Panc1 (cell line): ENCODE measurements at regions of chr7 and their contacts with region 1.

Region 1: DNA sequence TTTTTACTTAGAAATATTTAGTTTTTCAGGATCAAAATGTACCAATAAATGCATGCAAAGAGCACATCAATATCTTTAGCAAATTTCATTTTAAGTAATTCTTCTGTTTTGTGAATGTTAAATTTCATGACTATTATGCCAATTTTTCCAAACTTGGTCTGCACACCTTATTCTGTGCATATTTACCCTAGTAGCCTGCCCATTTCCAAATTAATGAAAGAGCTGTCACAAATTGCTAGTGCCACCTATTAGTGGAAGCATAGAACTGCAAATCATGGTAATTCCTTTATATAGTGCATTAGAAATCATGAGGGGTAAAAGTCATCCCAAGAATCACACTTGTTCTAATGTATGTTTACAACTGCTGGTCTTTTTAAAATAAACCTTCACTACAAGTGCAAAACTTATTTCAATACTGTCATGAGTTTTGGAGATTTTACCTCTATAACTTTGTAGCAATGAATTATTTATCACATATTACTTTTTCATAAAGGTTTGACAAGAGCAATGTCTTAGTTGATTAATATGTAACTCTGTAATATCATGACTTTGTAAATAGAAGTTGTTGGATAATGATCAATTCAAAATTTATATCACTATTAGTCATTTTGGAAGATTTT is 5.7 kb downstream of the SEMA3A start:
- DNase-seq: no peak
- ATAC-seq: no peak
- H3K4me3 ChIP-seq: no peak overlapping the region
- H3K27ac ChIP-seq: no peak overlapping the region; the same call in 1 of the 2 replicates
- H3K4me1 ChIP-seq: peaks cover 22% of the 10 kb centered on the region; the same call in 1 of the 2 replicates
- H3K27me3 ChIP-seq: no peaks in the 10 kb centered on the region
- CTCF ChIP-seq: peak; percentile 67; the same call in 1 of the 2 replicates

Region 2: DNA sequence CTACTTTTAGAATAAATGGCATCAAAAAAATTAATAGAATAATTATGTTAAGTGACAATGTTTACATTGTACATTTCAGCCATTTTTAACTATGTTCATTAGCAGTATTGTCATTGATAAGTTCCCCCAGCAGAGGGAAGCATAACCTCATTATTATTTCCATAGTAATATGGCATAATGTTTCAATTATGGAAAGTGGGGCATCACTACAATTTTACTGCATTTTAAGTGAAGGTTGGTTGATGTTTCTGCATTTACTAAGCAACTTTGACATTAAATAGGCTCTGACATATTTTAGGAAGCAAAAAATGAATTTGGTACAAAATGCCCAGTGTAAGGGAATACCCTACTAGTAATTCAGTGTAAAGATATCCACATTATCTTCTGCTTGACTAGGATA is 212.6 kb before region 1 on chr7:
- CTCF ChIA-PET with region 1: no interaction called
- POLR2A ChIA-PET with region 1: no interaction called
- in situ Hi-C with region 1: no loop called
- intact Hi-C with region 1: loop called (anchors 2 kb)
- DNase-seq: peak; percentile 28
- ATAC-seq: peak; percentile 77; the same call in 1 of the 2 replicates
- H3K4me3 ChIP-seq: no peak overlapping the region
- H3K27ac ChIP-seq: no peak overlapping the region; the same call in 1 of the 2 replicates
- H3K4me1 ChIP-seq: no peaks in the 10 kb centered on the region; the same call in 1 of the 2 replicates
- H3K27me3 ChIP-seq: no peaks in the 10 kb centered on the region
- CTCF ChIP-seq: peak; percentile 55; the same call in 1 of the 2 replicates

Region 3: DNA sequence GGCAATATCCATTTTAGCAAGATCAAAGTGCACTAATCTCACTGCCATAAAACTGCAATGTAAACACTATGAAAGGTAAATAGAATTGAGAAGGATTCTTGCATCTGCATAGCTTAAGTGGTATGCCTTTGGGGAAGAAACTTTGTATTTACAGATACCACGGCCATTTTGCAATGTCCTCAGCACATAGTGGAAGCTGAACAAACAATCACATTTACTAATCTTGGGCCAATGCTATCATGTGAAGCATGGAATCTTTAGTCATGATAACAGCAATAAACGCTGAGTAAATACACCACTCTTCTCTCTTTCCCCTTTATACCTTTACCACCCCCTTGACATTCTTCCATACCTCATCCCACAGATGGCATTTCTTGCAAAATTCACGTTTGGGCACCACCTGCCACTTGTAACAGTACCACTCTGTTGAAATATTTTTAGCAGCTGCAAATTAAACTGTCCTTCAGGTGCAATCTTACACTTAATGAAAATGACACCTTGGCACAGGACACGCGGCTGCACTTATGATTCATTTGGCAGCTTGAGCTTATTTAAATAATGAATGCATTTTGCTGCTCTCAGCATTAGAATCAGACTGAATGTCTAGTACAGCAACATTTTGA is 166.1 kb before region 1 on chr7:
- CTCF ChIA-PET with region 1: no interaction called
- POLR2A ChIA-PET with region 1: no interaction called
- in situ Hi-C with region 1: no loop called
- intact Hi-C with region 1: loop called (anchors 2 kb)
- DNase-seq: peak; percentile 77
- ATAC-seq: peak; percentile 84
- H3K4me3 ChIP-seq: no peak overlapping the region
- H3K27ac ChIP-seq: peak overlapping the region; percentile 89
- H3K4me1 ChIP-seq: peaks cover 19% of the 10 kb centered on the region
- H3K27me3 ChIP-seq: no peaks in the 10 kb centered on the region
- CTCF ChIP-seq: no peak